Activated T-helper 1 cell treated with anti-CD3 and anti-CD28 coated beads, Interleukin-12 subunit alpha, Interleukin-12 subunit beta, Interleukin-2, Interleukin-4 antibody, amounts not matched to agents 30 ng/mL and 10 ng/mL and 1 ng/mL, durations not matched to agents 14 hours and 24 hours and 36 hours (primary cell): ENCODE measurements at regions of chr7 and their contacts with region 1.

Region 1: DNA sequence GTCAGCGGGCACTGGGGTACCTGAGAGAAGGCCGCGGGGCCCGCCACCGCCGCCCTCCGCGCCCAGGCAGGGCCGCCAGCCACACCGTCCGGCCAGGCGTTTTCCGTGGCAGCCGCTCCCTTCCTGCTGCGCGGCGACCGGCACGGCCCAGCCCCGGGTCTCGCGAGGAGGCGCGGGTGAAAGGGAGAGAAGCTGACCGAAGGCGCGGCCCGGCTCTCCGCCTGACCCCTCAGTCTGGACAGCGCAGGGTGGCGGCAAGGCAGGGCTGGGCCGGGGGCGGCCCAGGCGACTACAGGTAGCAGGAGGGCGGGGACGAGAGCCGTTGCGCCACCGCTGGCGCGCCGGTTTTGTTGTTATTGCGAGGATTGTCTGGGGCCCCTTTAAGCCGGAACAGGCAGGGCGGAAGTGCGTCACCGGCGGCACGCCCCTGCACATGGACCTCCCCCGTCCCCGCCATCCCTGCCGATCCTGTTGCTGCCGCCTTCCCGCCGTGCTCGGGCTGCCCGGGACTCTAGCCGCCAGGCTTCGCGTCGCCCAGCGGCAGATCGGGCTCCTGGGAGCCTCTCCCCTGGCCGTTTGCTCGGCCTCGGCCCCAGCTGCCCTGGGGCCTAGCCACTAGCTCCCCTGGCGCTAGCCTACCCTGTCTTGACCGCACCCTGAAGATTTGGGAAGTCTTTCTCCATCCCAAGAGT is at the start of gene HERPUD2:
- DNase-seq: peak; percentile 88
- H3K4me3 Mint-ChIP-seq: peak within 1 kb of the TSS; percentile 99
- H3K27ac Mint-ChIP-seq: peak within 1 kb of the TSS; percentile 98
- H3K4me1 Mint-ChIP-seq: peaks cover 71% of the 10 kb centered on the region
- H3K27me3 Mint-ChIP-seq: no peaks in the 10 kb centered on the region
- total RNA-seq, gene HERPUD2: 24.7 and 24.8 TPM in 2 replicates

Region 2: DNA sequence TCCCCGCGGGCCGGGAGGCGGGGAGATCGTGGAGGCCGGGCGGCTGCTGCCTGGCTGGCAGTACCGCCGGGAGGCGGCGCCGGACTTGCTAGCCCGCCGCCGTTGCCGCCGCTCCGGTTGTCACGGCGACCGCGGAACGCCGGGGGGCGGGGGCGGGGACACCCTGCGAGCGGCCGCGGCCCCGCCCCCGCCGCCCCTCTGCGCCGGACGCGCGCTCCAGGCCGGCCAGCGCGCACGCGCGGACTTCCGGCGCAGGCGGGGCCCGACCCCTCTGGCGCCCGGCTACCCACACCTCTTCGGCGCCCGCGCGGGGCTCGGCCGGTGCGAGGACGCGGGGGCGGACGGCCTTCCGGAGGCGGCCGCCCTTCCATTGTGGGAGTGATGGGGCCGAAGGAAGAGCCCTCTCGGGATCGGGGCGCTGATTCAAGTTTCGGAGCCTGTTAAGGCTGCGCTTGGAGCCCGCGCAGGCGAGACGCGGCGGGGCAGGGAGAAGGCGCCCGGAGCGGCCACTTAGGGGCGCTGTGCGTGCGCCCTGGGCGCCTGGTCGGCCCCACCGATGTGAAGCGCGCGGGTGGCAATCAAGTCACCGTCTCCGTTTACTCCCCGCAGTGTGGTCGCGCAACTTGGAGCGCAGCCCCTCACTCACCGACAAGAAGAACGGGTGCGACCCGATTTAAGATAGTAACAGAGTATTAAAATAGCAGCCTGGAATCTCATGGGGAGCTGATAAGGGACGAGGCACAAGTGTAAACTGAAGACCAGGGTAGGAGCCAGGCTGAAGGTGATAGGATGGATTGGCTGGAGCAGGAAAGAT is 657.2 kb before region 1 on chr7:
- intact Hi-C with region 1: loop called (anchors 5 kb)
- DNase-seq: peak; percentile 85
- H3K4me3 Mint-ChIP-seq: peak overlapping the region; percentile 81
- H3K27ac Mint-ChIP-seq: peak overlapping the region; percentile 37
- H3K4me1 Mint-ChIP-seq: peaks cover 30% of the 10 kb centered on the region
- H3K27me3 Mint-ChIP-seq: peaks cover 13% of the 10 kb centered on the region

Region 3: GRCh38 chr7:35624299-35625186 is 70.4 kb before region 1 on chr7:
- intact Hi-C with region 1: no loop called
- DNase-seq: peak; percentile 6
- H3K4me3 Mint-ChIP-seq: no peak overlapping the region
- H3K27ac Mint-ChIP-seq: no peak overlapping the region
- H3K4me1 Mint-ChIP-seq: no peaks in the 10 kb centered on the region
- H3K27me3 Mint-ChIP-seq: peaks cover 5% of the 10 kb centered on the region

Region 4: DNA sequence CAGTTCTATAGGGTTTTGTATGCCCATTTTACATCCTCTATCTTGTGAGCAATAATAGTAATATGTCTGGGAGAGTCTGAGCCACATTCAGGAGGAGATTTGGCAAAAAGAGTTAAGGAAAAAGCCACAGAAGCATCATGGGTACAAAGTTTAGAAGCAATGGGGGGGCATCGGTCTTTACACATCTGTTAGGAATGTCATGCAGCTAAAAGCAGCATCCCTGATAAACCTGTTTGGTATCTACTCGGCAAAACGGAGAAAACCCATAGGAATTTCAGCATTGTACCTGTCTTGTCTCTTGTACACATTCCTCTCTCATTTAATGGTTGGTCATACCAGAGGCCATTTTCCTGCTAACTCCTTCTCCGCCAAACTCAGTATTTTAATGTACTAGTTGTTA is 12.5 kb after region 1 on chr7:
- intact Hi-C with region 1: loop called (anchors 1 kb)
- DNase-seq: no peak
- H3K4me3 Mint-ChIP-seq: no peak overlapping the region
- H3K27ac Mint-ChIP-seq: no peak overlapping the region
- H3K4me1 Mint-ChIP-seq: peaks cover 20% of the 10 kb centered on the region
- H3K27me3 Mint-ChIP-seq: peaks cover 16% of the 10 kb centered on the region

Region 5: GRCh38 chr7:35736725-35737124 is 41.8 kb after region 1 on chr7:
- intact Hi-C with region 1: no loop called
- DNase-seq: no peak
- H3K4me3 Mint-ChIP-seq: no peak overlapping the region
- H3K27ac Mint-ChIP-seq: no peak overlapping the region
- H3K4me1 Mint-ChIP-seq: peaks cover 13% of the 10 kb centered on the region
- H3K27me3 Mint-ChIP-seq: peaks cover 15% of the 10 kb centered on the region

Region 6: DNA sequence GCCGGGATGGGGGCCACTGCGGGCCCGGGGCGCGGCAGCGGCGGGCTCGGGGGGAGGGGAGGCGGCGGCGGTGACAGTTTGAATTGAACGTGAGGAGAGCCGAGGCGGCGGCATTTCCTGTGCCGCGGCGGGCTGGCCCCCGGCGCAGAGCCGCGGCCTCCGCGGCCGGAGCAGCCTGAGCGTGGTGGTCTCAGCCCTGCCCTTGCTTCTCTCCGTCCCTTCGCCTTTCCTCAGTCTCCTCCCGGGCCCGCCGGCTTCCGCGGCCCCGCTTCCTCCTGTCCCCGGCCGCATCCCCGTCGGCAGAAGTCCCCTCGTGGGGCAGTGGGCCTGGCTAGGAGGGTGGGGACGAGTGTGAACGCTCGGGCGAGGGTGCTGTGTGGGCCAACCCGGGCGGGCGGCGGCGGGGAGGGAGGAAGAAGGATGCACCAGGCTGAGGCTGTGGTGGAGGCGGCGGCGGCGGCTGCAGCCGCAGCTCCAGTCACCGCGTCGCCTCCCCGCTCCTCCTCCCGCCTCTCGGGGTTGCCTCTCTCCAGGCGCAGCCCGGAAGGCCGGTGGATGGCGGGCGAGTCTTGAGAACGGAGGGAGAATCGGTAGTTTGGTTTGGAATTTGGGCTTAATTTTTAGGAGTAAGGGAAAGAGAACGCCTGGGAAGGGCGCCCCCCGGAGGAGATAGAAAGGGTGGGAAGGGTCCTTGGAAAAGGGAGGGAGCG is 106.6 kb after region 1 on chr7:
- intact Hi-C with region 1: loop called (anchors 1 kb)
- DNase-seq: peak; percentile 64
- H3K4me3 Mint-ChIP-seq: peak overlapping the region; percentile 98
- H3K27ac Mint-ChIP-seq: peak overlapping the region; percentile 95
- H3K4me1 Mint-ChIP-seq: peaks cover 47% of the 10 kb centered on the region
- H3K27me3 Mint-ChIP-seq: no peaks in the 10 kb centered on the region

Region 7: GRCh38 chr7:36152756-36153570 is 458.0 kb after region 1 on chr7 and contains the start of gene EEPD1:
- intact Hi-C with region 1: loop called (anchors 2 kb)
- DNase-seq: peak; percentile 99
- H3K4me3 Mint-ChIP-seq: peak within 1 kb of the TSS; percentile 78
- H3K27ac Mint-ChIP-seq: no peak within 1 kb of the TSS
- H3K4me1 Mint-ChIP-seq: peaks cover 13% of the 10 kb centered on the region
- H3K27me3 Mint-ChIP-seq: peaks cover 12% of the 10 kb centered on the region
- total RNA-seq, gene EEPD1: 0.91 and 1.5 TPM in 2 replicates

Region 8: DNA sequence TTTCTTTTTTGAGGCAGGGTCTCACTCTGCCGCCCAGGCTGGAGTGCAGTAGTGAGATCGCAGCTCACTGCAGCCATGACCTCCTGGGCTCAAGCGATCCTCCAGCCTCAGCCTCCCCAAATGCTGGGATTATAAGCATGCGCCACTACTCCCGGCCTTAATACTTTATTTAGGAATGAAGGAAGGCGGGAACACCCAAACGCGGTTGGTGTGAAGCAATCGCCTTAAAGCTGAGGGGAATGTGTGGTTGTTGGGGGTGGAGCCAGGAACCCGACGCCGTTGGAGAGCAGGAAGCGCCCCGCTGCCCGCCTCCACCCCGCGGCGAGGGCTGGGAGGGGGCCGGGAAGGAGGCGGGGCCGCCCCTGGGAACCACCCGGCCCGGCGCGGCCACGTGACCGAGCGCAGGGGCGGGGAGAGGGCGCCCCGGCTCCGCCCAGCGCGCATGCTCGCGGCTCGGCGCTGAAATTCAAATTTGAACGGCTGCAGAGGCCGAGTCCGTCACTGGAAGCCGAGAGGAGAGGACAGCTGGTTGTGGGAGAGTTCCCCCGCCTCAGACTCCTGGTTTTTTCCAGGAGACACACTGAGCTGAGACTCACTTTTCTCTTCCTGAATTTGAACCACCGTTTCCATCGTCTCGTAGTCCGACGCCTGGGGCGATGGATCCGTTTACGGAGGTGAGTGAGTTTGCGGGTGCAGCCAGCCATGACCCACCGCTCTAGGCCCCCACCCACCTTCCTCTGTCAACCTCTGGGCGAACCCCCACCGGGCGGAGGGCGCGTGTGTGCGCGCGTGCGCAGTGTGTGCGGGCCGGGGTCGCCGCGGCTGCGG is 694.7 kb after region 1 on chr7 and contains the start of gene ANLN:
- intact Hi-C with region 1: loop called (anchors 10 kb)
- DNase-seq: peak; percentile 84
- H3K4me3 Mint-ChIP-seq: peak within 1 kb of the TSS; percentile 86
- H3K27ac Mint-ChIP-seq: peak within 1 kb of the TSS; percentile 78
- H3K4me1 Mint-ChIP-seq: peaks cover 37% of the 10 kb centered on the region
- H3K27me3 Mint-ChIP-seq: peaks cover 12% of the 10 kb centered on the region
- total RNA-seq, gene ANLN: 23.8 and 31.0 TPM in 2 replicates